RWPE1 (cell line): ENCODE measurements at regions of chr10 and their contacts with region 1.

Region 1: DNA sequence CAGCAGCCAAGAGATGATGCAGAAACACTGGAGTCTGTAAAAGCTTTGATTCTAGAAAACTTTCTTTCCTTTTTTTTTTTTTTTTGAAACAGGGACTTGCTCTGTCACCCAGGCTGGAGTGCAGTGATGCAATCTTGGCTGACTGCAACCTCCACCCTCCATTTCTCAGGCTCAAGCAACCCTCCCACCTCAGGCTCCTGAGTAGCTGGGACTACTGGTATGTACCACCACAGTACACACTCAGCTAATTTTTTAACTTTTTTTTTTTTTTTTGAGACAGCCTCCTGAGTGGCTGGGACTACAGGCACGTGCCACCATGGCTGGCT is 17.0 kb upstream of the BAG3 start:
- DNase-seq: no peak
- H3K27ac ChIP-seq: no peak overlapping the region
- CTCF ChIP-seq: no peak

Region 2: GRCh38 chr10:119575506-119575905 is 58.7 kb before region 1 on chr10:
- CTCF ChIA-PET with region 1: no interaction called
- POLR2A ChIA-PET with region 1: no interaction called
- DNase-seq: peak; percentile 68
- H3K27ac ChIP-seq: no peak overlapping the region
- CTCF ChIP-seq: no peak

Region 3: GRCh38 chr10:119728172-119728800 is 94.1 kb after region 1 on chr10:
- CTCF ChIA-PET with region 1: interaction called, 4 read pairs
- POLR2A ChIA-PET with region 1: interaction called, 12 read pairs
- DNase-seq: no peak
- H3K27ac ChIP-seq: no peak overlapping the region
- CTCF ChIP-seq: no peak